Posterior vena cava (tissue), 2 donors: ENCODE measurements at regions of chr1 and their contacts with region 1.

Region 1: GRCh38 chr1:53945433-53946251 is at the start of gene IFT25:
- DNase-seq: peak; percentile 99
- total RNA-seq, gene IFT25: 22.5 to 23.7 TPM

Region 2: DNA sequence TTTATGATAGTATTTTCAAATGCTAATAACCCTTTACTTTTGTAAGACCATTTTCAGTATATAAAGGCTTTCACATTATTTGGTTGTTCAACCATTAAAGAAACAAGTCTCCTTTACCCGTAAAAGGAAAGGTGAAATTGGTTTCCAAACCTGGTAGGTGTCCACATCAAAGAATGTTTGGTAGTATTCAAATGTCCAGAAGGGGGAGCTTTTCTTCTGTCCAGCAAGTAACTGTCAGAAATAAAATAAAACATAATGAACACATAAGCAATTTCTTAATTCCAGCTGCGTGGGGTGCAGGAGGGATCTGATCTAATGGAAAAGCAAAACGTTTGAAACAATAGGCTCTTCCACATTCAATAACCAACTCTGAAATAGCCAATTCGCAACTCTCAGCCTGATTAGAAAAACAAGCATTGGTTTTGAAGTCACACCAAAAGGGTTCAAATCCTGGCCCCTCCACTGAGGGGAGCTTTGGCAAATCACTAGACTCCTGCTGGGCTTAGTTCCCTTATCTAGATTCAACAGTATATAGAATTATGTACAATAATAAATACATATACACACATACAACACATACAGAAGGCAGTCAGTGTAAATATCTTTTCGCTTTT is 67.0 kb before region 1 on chr1:
- intact Hi-C with region 1: loop called in 1 of 2 experiments (anchors 5 kb)
- DNase-seq: no peak

Region 3: GRCh38 chr1:53889304-53890298 is 56.0 kb before region 1 on chr1 and contains the start of gene YIPF1:
- intact Hi-C with region 1: loop called in 1 of 2 experiments (anchors 5 kb)
- DNase-seq: peak; percentile 97
- total RNA-seq, gene YIPF1: 13.8 to 15.1 TPM

Region 4: DNA sequence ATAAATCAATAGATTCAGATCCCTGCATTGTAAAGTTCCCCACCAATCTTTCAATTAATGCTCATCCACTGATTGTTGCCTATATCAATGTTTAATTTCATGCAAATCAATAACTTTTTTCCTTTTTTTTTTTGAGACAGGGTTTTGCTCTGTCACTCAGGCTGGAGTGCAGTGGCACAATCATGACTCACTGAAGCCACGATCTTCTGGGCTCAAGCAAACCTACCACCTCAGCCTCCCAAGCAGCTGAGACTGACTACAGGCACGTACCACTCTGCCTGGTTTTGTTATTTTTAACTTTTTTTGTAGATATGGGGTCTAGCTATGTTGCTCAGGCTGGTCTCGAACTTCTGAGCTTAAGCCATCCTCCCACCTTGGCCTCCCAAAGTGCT is 26.0 kb before region 1 on chr1:
- intact Hi-C with region 1: loop called in 1 of 2 experiments (anchors 2 kb)
- DNase-seq: no peak